ENCODE measurements at regions of chr1 and their contacts with region 1.

Region 1: DNA sequence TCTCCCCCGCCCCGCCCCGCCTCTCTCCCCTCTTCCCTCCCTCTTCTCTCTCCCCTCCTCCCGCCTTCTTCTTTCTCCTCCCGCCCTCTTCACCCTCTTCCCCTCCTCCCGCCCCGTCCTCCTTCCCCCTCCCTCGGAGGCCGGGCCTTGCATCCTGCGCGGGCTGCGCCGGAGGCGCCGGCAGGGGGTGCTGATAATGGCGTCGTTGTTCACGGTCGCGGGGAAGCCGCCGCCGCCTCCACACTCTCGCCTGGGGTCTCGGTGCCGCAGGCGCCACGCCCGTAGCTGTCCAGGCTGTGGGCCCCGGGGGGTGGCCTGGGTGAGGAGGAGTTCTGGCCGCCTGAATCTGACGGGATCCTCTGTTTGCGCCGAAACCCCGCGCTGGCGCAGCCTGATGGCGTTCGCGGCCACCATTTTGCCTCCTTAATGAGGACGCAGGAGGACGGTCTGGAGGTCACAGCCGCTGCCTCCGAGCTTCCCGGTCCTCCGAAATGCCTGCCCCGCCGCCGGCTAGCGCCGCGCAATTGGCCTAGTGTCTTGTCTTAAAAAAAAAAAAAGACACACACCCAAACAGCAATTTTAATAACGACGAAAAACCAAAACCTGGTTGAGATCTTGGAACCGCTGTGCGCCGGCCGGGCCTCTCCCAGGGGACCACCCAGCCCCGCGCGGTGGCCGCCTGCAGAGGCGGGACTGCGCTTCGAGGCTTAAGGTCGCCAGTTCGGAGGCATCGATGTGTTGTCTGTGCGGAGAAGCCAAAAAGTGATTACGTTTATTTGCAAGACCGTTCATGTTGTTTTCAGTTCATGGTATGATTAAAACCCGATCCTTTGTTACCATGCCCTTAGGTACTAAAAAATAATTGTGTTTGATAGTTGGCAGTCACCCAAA is 106.6 kb upstream of the HNRNPU start:
- DNase-seq: peak; percentile 91
- ATAC-seq: peak; percentile 75
- H3K4me3 Mint-ChIP-seq: peak overlapping the region; percentile 95
- H3K27ac Mint-ChIP-seq: peak overlapping the region; percentile 99
- H3K4me1 Mint-ChIP-seq: peaks cover 17% of the 10 kb centered on the region
- H3K27me3 Mint-ChIP-seq: no peaks in the 10 kb centered on the region
- CTCF ChIP-seq: no peak

Region 2: GRCh38 chr1:244002721-244003120 is 968.2 kb before region 1 on chr1:
- CTCF ChIA-PET with region 1: no interaction called
- POLR2A ChIA-PET with region 1: no interaction called
- intact Hi-C with region 1: no loop called
- DNase-seq: no peak
- ATAC-seq: no peak
- H3K4me3 Mint-ChIP-seq: no peak overlapping the region
- H3K27ac Mint-ChIP-seq: no peak overlapping the region
- H3K4me1 Mint-ChIP-seq: peaks cover 10% of the 10 kb centered on the region
- H3K27me3 Mint-ChIP-seq: no peaks in the 10 kb centered on the region
- CTCF ChIP-seq: no peak

Region 3: DNA sequence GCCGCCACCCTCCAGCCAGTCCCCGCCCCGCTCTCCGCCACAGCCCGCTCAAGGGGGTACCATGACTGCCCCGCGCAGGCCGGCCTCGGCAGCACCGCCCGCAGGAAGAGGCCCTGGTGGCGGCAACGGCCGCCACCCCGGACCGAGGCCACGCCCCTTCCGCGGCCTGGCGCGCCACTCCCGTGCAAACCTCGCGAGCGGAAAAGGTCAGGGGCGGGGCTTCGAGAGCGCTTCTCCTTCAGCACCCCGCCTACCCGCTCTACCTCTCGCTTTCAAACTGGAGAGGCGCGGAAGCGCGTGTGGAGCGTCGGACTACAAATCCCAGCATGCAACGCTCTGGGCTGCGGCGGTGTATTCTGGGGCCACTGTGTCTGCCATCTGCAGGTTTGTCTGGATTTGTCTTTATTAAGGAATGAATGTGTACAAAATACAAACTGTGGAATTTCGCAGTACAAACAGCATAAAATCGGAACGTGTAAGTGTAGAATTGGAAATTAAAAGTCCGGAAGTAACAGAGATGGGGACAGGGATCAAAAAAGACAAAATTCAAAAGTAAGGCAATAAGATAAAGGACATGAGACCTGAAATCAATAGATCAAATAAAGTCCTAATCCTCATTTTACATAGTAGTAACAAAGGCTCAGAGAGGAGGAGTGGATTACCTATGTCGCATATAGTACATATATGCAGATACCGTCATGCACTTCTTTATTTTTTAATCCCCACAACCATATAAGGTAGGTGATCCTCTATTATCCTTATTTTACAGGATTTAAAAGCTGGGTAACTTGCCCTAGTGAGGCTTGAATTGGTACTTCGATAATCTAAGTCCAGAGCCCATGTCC is 518.7 kb before region 1 on chr1:
- CTCF ChIA-PET with region 1: no interaction called
- POLR2A ChIA-PET with region 1: no interaction called
- intact Hi-C with region 1: loop called (anchors 1 kb)
- DNase-seq: peak; percentile 97
- ATAC-seq: peak; percentile 94
- H3K4me3 Mint-ChIP-seq: peak overlapping the region; percentile 95
- H3K27ac Mint-ChIP-seq: peak overlapping the region; percentile 78
- H3K4me1 Mint-ChIP-seq: peaks cover 32% of the 10 kb centered on the region
- H3K27me3 Mint-ChIP-seq: no peaks in the 10 kb centered on the region
- CTCF ChIP-seq: no peak

Region 4: GRCh38 chr1:244699741-244700140 is 271.2 kb before region 1 on chr1:
- CTCF ChIA-PET with region 1: no interaction called
- POLR2A ChIA-PET with region 1: no interaction called
- intact Hi-C with region 1: no loop called
- DNase-seq: no peak
- ATAC-seq: no peak
- H3K4me3 Mint-ChIP-seq: no peak overlapping the region
- H3K27ac Mint-ChIP-seq: no peak overlapping the region
- H3K4me1 Mint-ChIP-seq: no peaks in the 10 kb centered on the region
- H3K27me3 Mint-ChIP-seq: no peaks in the 10 kb centered on the region
- CTCF ChIP-seq: no peak

Region 5: DNA sequence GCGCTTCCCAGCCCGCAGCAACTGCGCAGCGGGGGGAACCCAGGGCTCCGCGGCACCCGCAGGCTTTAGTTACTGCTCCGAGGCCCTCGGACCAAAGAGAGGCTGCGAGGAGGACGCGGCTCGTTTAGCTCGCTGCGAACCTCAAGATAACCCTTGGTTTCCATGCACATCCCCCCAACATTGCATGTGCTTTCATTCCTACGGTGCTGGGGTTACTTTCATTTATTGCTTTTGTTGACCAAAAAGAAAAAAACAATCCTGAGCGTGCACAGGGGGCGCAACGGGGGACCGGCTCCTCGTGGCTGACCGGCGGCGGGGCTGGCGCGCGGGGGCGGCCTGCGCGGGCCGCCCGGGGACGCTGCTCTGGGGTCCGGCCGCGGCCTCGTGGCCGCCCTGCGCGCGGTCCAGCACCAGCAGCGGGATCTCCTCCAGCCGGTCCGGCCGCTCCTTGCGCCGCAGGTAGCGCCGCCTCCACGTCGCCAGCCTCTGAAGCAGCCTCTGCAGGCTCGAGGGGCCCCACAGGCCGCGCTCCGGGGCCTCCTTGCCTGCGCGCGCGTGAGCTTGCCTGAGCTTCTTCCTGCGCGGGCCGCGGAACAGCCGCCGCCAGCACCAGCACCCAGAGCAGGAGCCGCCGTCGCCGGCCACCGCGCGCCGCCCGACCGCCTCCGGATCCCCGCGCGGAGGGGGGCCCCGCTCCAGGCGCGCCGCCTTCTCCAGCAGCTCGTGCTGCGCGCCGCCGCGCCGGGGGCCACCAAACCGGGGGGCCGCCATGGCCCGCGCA is 240.6 kb before region 1 on chr1:
- CTCF ChIA-PET with region 1: no interaction called
- POLR2A ChIA-PET with region 1: no interaction called
- intact Hi-C with region 1: loop called (anchors 1 kb)
- DNase-seq: peak; percentile 48
- ATAC-seq: peak; percentile 46
- H3K4me3 Mint-ChIP-seq: peak overlapping the region; percentile 87
- H3K27ac Mint-ChIP-seq: peak overlapping the region; percentile 83
- H3K4me1 Mint-ChIP-seq: peaks cover 23% of the 10 kb centered on the region
- H3K27me3 Mint-ChIP-seq: no peaks in the 10 kb centered on the region
- CTCF ChIP-seq: no peak

Region 6: GRCh38 chr1:244815600-244816099 is 155.3 kb before region 1 on chr1:
- CTCF ChIA-PET with region 1: no interaction called
- POLR2A ChIA-PET with region 1: interaction called, 8 read pairs
- intact Hi-C with region 1: loop called (anchors 1 kb)
- DNase-seq: no peak
- ATAC-seq: peak; percentile 56
- H3K4me3 Mint-ChIP-seq: peak overlapping the region; percentile 82
- H3K27ac Mint-ChIP-seq: peak overlapping the region; percentile 84
- H3K4me1 Mint-ChIP-seq: peaks cover 28% of the 10 kb centered on the region
- H3K27me3 Mint-ChIP-seq: no peaks in the 10 kb centered on the region
- CTCF ChIP-seq: no peak

Region 7: GRCh38 chr1:244945109-244945671 is 25.7 kb before region 1 on chr1:
- CTCF ChIA-PET with region 1: interaction called, 5 read pairs
- POLR2A ChIA-PET with region 1: interaction called, 52 read pairs
- intact Hi-C with region 1: loop called (anchors 1 kb)
- DNase-seq: no peak
- ATAC-seq: peak; percentile 29
- H3K4me3 Mint-ChIP-seq: peak overlapping the region; percentile 55
- H3K27ac Mint-ChIP-seq: peak overlapping the region; percentile 82
- H3K4me1 Mint-ChIP-seq: peaks cover 35% of the 10 kb centered on the region
- H3K27me3 Mint-ChIP-seq: no peaks in the 10 kb centered on the region
- CTCF ChIP-seq: no peak

Region 8: DNA sequence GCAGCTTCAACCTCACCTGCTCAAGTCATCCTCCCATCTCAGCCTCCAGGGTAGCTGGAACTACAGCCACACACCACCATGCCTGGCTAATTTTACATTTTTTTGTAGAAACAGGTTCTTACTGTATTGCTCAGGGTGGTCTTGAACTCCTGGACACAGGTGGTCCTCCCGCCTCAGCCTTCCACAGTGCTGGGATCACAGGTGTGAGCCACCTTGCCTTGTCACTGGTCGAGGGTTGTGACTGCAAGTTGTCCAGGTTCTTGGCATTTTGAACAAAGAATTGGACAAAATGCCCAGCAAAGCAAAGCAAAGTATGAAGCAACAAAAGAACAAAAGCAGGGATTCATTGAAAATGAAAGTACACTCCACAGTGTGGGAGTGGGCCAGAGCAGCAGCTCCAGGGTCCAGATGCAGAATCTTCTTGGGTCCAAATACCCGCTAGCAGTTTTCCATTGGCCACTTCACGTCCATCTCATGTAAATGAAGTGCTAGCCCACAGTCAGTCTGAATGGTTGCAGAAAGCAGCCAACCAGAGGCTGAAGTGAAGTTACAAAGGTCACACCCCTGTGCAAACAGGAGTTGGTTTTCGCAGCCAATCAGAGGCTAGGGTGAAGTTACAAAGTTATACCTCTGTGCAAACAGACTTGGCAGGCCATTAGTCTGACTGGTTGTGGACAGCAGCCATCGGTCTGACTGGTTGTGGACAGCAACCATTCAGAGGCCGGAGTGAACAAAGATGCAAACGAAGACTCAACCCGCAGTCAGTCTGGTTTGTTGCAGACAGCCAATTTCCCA is 74.4 kb after region 1 on chr1:
- CTCF ChIA-PET with region 1: interaction called, 4 read pairs
- POLR2A ChIA-PET with region 1: interaction called, 13 read pairs
- intact Hi-C with region 1: loop called (anchors 1 kb)
- DNase-seq: no peak
- ATAC-seq: no peak
- H3K4me3 Mint-ChIP-seq: no peak overlapping the region
- H3K27ac Mint-ChIP-seq: no peak overlapping the region
- H3K4me1 Mint-ChIP-seq: no peaks in the 10 kb centered on the region
- H3K27me3 Mint-ChIP-seq: no peaks in the 10 kb centered on the region
- CTCF ChIP-seq: no peak